Activated CD4-positive, alpha-beta T cell treated with anti-CD3 and anti-CD28 coated beads for 36 hours (primary cell): ENCODE measurements at regions of chr6 and their contacts with region 1.

Region 1: DNA sequence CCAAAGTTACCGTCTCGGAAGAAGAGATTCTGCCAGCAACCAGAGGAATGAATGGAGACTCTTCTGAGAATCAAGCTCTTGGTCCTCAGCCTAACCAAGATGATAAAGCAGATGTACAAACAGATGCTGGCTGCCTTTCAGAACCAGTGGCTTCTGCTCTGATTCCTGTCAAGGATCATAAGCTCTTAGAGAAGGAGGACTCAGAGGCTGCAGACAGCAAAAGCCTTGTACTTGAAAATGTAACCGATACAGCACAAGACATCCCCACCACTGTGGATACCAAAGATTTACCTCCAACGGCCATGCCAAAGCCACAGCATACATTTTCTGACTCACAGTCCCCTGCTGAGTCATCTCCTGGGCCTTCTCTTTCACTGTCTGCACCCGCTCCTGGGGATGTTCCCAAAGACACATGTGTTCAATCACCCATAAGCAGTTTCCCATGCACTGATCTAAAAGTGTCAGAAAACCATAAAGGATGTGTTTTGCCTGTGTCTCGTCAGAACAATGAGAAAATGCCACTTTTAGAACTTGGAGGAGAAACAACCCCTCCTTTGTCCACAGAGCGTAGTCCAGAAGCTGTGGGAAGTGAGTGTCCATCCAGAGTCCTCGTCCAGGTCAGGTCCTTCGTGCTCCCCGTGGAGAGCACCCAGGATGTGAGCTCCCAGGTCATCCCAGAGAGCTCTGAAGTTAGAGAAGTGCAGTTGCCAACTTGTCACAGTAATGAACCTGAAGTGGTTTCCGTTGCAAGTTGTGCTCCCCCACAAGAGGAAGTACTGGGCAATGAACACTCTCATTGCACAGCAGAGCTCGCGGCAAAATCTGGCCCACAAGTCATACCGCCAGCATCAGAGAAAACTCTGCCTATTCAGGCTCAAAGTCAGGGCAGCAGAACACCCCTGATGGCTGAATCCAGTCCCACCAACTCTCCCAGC is 109.6 kb downstream of the RTN4IP1 start:
- DNase-seq: peak; percentile 89
- ATAC-seq: peak; percentile 66
- H3K4me3 Mint-ChIP-seq: peak overlapping the region; percentile 88
- H3K27ac Mint-ChIP-seq: peak overlapping the region; percentile 99
- H3K4me1 Mint-ChIP-seq: peaks cover 71% of the 10 kb centered on the region
- H3K27me3 Mint-ChIP-seq: no peaks in the 10 kb centered on the region

Region 2: DNA sequence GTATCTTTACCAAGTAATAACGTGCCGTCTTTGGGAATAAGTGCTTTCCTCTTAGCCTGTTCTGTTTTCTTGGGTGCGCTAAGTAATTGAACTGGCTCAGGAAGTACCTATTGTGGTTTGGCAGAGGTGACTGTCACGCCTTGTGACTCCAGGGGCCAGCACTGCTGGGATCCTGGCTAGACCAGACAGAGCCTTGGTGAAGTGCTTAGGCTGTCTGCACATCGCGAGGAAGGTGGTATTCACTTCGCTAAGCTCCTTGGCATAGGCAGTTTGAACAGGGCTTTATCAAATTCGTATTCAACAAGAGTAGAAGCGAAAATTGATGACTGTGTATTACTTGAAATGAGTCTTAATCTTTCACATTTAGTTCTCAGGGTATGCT is 416.0 kb before region 1 on chr6:
- CTCF ChIA-PET with region 1: no interaction called
- POLR2A ChIA-PET with region 1: no interaction called
- intact Hi-C with region 1: loop called (anchors 1 to 5 kb)
- DNase-seq: peak; percentile 65
- ATAC-seq: peak; percentile 47
- H3K4me3 Mint-ChIP-seq: peak overlapping the region; percentile 82
- H3K27ac Mint-ChIP-seq: peak overlapping the region; percentile 62
- H3K4me1 Mint-ChIP-seq: peaks cover 77% of the 10 kb centered on the region
- H3K27me3 Mint-ChIP-seq: peaks cover 16% of the 10 kb centered on the region

Region 3: GRCh38 chr6:106244931-106245330 is 274.8 kb before region 1 on chr6:
- CTCF ChIA-PET with region 1: no interaction called
- POLR2A ChIA-PET with region 1: no interaction called
- intact Hi-C with region 1: no loop called
- DNase-seq: no peak
- ATAC-seq: no peak
- H3K4me3 Mint-ChIP-seq: no peak overlapping the region
- H3K27ac Mint-ChIP-seq: no peak overlapping the region
- H3K4me1 Mint-ChIP-seq: peaks cover 17% of the 10 kb centered on the region
- H3K27me3 Mint-ChIP-seq: no peaks in the 10 kb centered on the region

Region 4: DNA sequence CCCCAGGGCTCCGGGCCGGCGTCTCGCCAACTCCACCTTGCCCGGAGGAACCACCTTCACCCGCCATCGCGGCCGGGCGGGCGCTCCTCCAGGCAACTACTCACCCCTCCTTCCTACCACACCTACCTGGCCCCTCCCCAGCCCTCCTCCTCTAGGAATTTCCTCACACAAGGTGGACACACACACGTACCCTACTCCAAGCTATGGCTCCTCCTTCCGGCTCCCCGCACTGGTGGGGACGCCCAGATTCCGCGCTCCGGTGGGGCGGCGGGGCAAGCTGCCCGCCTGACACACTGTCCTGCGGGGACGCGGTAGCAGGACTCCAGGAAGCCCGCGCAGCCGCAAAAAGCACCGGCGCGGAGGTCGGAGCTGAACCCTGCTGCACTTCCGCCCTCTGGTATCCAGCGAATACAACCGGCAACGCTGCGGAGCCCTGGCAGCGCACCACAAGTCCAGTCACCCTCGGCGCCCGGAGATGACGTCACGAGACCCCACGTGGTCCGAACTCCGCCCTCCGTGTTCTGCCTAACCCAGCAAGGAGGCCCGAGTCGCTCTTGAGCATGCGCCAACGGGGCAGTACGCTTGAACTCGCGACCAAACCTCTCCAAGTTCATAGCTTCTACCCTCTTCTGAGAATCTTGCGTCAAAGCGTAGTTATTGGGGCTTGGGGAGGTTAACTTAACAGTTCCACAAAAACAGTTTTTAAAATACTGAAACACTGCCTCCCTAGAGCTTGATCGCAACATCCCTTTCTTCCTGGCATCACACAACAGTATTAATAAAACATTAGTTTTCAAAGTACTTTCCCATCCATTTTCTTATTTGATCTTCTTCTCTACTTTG is 194.2 kb before region 1 on chr6 and contains the start of gene ATG5:
- CTCF ChIA-PET with region 1: no interaction called
- POLR2A ChIA-PET with region 1: interaction called, 3 read pairs
- intact Hi-C with region 1: loop called (anchors 1 to 5 kb)
- DNase-seq: peak; percentile 100
- ATAC-seq: peak; percentile 96
- H3K4me3 Mint-ChIP-seq: peak within 1 kb of the TSS; percentile 99
- H3K27ac Mint-ChIP-seq: peak within 1 kb of the TSS; percentile 98
- H3K4me1 Mint-ChIP-seq: peaks cover 39% of the 10 kb centered on the region
- H3K27me3 Mint-ChIP-seq: peaks cover 8% of the 10 kb centered on the region
- total RNA-seq, gene ATG5: 27.2 to 31.6 TPM

Region 5: DNA sequence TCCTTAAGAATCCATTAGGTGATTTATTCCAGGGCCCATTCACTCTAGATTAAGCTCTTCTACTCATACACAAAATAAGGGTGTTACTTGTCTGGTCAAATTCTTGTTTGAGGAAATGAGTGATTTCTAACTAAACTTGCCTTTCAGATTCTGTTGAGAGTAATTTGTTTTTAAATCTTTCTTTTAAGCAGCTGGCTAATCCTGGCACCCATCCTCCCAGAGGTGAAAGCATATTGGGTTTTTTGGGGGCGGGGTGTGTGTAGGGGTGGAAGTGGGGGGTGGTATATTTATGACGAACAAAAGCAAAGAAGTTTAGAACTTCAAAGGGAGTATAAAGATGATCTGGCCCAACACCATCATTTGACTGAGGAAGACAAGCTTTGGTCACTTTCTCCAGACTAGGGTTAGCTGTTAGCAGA is 14.8 kb after region 1 on chr6:
- CTCF ChIA-PET with region 1: interaction called, 13 read pairs
- POLR2A ChIA-PET with region 1: interaction called, 18 read pairs
- intact Hi-C with region 1: loop called in 1 of 2 experiments (anchors 2 kb)
- DNase-seq: peak; percentile 72
- ATAC-seq: peak; percentile 79
- H3K4me3 Mint-ChIP-seq: no peak overlapping the region
- H3K27ac Mint-ChIP-seq: peak overlapping the region; percentile 78
- H3K4me1 Mint-ChIP-seq: peaks cover 80% of the 10 kb centered on the region
- H3K27me3 Mint-ChIP-seq: no peaks in the 10 kb centered on the region

Region 6: GRCh38 chr6:106629103-106629858 is 109.6 kb after region 1 on chr6 and contains the starts of genes QRSL1 and RTN4IP1:
- CTCF ChIA-PET with region 1: no interaction called
- POLR2A ChIA-PET with region 1: no interaction called
- intact Hi-C with region 1: loop called (anchors 5 kb)
- DNase-seq: peak; percentile 90
- ATAC-seq: peak; percentile 91
- H3K4me3 Mint-ChIP-seq: peak within 1 kb of the TSS; percentile 97
- H3K27ac Mint-ChIP-seq: peak within 1 kb of the TSS; percentile 98
- H3K4me1 Mint-ChIP-seq: peaks cover 28% of the 10 kb centered on the region
- H3K27me3 Mint-ChIP-seq: no peaks in the 10 kb centered on the region
- total RNA-seq, gene QRSL1: 15.8 to 17.9 TPM
- total RNA-seq, gene RTN4IP1: 4.8 to 9.3 TPM

Region 7: GRCh38 chr6:107275330-107275865 is 755.7 kb after region 1 on chr6:
- CTCF ChIA-PET with region 1: no interaction called
- POLR2A ChIA-PET with region 1: no interaction called
- intact Hi-C with region 1: no loop called
- DNase-seq: no peak
- ATAC-seq: no peak
- H3K4me3 Mint-ChIP-seq: no peak overlapping the region
- H3K27ac Mint-ChIP-seq: no peak overlapping the region
- H3K4me1 Mint-ChIP-seq: peaks cover 2% of the 10 kb centered on the region
- H3K27me3 Mint-ChIP-seq: no peaks in the 10 kb centered on the region

Region 8: GRCh38 chr6:107820338-107821261 is 1300.9 kb after region 1 on chr6:
- CTCF ChIA-PET with region 1: no interaction called
- POLR2A ChIA-PET with region 1: no interaction called
- intact Hi-C with region 1: loop called (anchors 5 to 10 kb)
- DNase-seq: peak; percentile 60
- ATAC-seq: no peak
- H3K4me3 Mint-ChIP-seq: peak overlapping the region; percentile 87
- H3K27ac Mint-ChIP-seq: peak overlapping the region; percentile 98
- H3K4me1 Mint-ChIP-seq: peaks cover 84% of the 10 kb centered on the region
- H3K27me3 Mint-ChIP-seq: no peaks in the 10 kb centered on the region